Activated naive CD4-positive, alpha-beta T cell treated with anti-CD3 and anti-CD28 coated beads for 36 hours (primary cell): ENCODE measurements at regions of chr10 and their contacts with region 1.

Region 1: DNA sequence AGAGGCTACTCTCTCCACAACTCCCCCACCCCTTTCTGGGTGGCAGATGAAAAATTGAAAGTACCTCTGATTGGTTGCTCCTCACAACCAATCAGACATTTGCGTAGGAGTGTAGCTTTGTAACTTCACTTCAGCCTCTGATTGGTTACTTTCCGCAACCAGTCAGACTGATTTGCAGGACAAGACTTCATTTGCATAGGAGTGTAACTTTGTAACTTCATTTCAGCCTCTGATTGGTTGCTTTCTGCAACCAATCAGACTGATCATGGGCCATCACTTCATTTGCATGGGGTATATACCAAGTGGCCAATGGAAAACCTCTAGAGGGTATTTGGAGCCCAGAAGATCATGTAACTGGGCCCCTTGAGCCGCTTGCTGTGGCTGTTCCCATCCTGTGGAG is 25.6 kb downstream of the CDNF start:
- DNase-seq: no peak
- H3K4me3 Mint-ChIP-seq: no peak overlapping the region
- H3K27ac Mint-ChIP-seq: no peak overlapping the region
- H3K4me1 Mint-ChIP-seq: peaks cover 24% of the 10 kb centered on the region
- H3K27me3 Mint-ChIP-seq: no peaks in the 10 kb centered on the region

Region 2: DNA sequence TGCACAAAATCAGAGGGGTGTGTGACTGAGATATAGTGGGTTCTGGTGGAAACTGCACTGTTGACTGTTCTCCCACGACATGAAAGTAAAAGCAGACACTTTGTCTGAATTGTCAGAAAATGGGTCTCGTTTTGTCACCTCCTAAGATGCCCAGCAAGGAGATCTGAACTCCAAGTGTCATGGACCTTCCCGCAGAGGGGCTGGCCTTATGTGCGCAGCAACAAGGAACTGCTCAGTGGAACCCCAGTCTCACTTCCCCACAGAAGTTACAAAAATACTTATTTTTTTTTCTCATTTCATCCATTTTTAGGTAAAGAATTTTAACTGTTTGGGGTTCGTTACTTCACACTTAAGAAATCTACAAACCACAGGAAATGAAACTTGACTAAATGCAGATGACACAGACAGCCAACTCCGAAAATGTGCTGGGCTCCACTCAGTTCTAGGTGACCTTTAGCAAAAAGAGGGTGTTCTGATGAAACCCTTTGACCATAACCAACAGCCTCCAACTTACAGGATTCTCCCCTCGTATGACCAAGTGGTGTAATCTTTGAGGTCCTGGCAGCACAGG is 152.6 kb before region 1 on chr10:
- CTCF ChIA-PET with region 1: no interaction called
- intact Hi-C with region 1: loop called (anchors 1 kb)
- DNase-seq: peak; percentile 67
- H3K4me3 Mint-ChIP-seq: peak overlapping the region; percentile 32
- H3K27ac Mint-ChIP-seq: peak overlapping the region; percentile 89
- H3K4me1 Mint-ChIP-seq: peaks cover 68% of the 10 kb centered on the region
- H3K27me3 Mint-ChIP-seq: no peaks in the 10 kb centered on the region

Region 3: DNA sequence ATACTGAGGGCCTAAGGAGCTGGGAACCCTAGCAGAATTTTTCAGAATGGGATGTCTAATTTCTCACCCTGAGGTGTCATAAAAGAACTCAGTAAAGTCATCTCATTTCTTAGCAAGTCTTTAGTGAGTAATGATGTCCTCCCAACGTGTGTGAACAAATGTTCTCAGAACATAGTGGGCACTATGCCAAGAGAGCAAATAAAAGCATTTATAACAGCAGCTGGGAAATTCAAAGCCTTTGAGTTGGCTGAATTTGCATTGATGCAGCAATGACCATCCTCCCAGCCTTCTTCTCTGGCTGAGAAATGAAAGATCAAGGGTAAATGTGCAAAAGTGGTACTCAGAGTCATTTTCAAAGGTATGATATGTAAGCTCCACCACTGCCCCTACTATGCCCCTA is 147.0 kb before region 1 on chr10:
- CTCF ChIA-PET with region 1: no interaction called
- intact Hi-C with region 1: loop called (anchors 1 kb)
- DNase-seq: peak; percentile 65
- H3K4me3 Mint-ChIP-seq: no peak overlapping the region
- H3K27ac Mint-ChIP-seq: peak overlapping the region; percentile 78
- H3K4me1 Mint-ChIP-seq: peaks cover 53% of the 10 kb centered on the region
- H3K27me3 Mint-ChIP-seq: no peaks in the 10 kb centered on the region

Region 4: GRCh38 chr10:14822879-14823755 is 10.8 kb after region 1 on chr10:
- CTCF ChIA-PET with region 1: interaction called, 13 read pairs
- intact Hi-C with region 1: no loop called
- DNase-seq: peak; percentile 64
- H3K4me3 Mint-ChIP-seq: no peak overlapping the region
- H3K27ac Mint-ChIP-seq: no peak overlapping the region
- H3K4me1 Mint-ChIP-seq: peaks cover 3% of the 10 kb centered on the region
- H3K27me3 Mint-ChIP-seq: no peaks in the 10 kb centered on the region